ENCODE measurements at regions of chr15 and their contacts with region 1.

Region 1: GRCh38 chr15:75321708-75322107 is 14.2 kb upstream of the COMMD4 start:
- DNase-seq: no peak
- ATAC-seq: no peak
- H3K4me3 ChIP-seq: no peak overlapping the region
- H3K4me3 Mint-ChIP-seq: no peak overlapping the region
- H3K27ac ChIP-seq: no peak overlapping the region
- H3K27ac Mint-ChIP-seq: no peak overlapping the region
- H3K4me1 ChIP-seq: no peaks in the 10 kb centered on the region
- H3K4me1 Mint-ChIP-seq: no peaks in the 10 kb centered on the region
- H3K27me3 ChIP-seq: no peaks in the 10 kb centered on the region
- H3K27me3 Mint-ChIP-seq: no peaks in the 10 kb centered on the region
- CTCF ChIP-seq: no peak

Region 2: GRCh38 chr15:75237316-75237982 is 84.3 kb before region 1 on chr15:
- CTCF ChIA-PET with region 1: no interaction called
- POLR2A ChIA-PET with region 1: no interaction called
- intact Hi-C with region 1: loop called in 1 of 2 experiments (anchors 5 kb)
- DNase-seq: peak in 1 of 14 experiments; percentile 5
- ATAC-seq: no peak
- H3K4me3 ChIP-seq: no peak overlapping the region
- H3K4me3 Mint-ChIP-seq: no peak overlapping the region
- H3K27ac ChIP-seq: no peak overlapping the region
- H3K27ac Mint-ChIP-seq: no peak overlapping the region
- H3K4me1 ChIP-seq: no peaks in the 10 kb centered on the region
- H3K4me1 Mint-ChIP-seq: no peaks in the 10 kb centered on the region
- H3K27me3 ChIP-seq: peaks cover 3 to 4% of the 10 kb centered on the region in 2 experiments
- H3K27me3 Mint-ChIP-seq: peaks cover 10% of the 10 kb centered on the region
- CTCF ChIP-seq: no peak